ENCODE measurements at regions of chr4 and their contacts with region 1.

Region 1: DNA sequence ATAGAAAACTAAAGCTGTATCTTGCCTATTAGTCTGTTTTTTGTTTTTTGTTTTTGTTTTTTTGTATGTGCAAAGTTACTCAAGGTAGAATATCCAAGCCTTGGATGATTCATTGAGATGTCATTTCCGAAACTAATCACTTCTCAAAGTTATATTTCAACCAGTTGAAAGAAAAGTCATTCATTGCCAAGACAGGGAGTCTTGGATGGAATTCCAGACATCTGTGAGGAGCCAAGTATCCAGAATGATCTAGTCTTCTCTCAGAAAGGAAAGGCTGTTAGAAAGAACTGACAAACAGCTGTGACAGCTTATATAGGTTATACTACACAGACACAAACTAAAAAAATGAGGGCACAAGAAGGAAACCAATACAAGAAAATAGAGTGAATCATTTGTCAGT is 141.1 kb upstream of the NDST3 start:
- DNase-seq: no peak
- H3K4me3 ChIP-seq: no peak overlapping the region
- H3K27me3 ChIP-seq: no peaks in the 10 kb centered on the region
- CTCF ChIP-seq: no peak

Region 2: DNA sequence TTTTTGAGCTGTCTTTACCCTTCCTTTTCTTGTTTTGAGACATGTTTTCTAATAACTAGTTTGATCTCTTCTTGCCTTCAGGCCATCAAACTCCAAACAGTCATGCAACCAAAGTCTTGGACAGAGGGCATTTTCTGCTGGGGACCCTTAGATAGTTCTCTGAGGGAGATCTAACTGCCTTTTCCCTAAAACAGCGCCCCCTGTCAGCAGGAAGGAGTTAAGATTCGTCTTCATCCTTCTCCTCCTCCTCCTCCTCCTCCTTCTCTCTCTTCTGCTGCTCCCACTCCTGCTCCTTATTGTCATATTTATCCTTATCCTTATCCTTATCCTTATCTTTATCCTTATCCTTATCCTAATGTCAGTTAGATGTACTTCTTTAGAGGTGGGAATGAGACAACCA is 1225.0 kb before region 1 on chr4:
- CTCF ChIA-PET with region 1: no interaction called
- POLR2A ChIA-PET with region 1: interaction called, 10 read pairs
- DNase-seq: no peak
- H3K4me3 ChIP-seq: no peak overlapping the region
- H3K27me3 ChIP-seq: no peaks in the 10 kb centered on the region
- CTCF ChIP-seq: no peak

Region 3: GRCh38 chr4:117916728-117917127 is 23.5 kb after region 1 on chr4:
- CTCF ChIA-PET with region 1: no interaction called
- POLR2A ChIA-PET with region 1: no interaction called
- DNase-seq: no peak
- H3K4me3 ChIP-seq: no peak overlapping the region
- H3K27me3 ChIP-seq: no peaks in the 10 kb centered on the region
- CTCF ChIP-seq: no peak